WTC11 (cell line): ENCODE measurements at regions of chrX and their contacts with region 1.

Region 1: DNA sequence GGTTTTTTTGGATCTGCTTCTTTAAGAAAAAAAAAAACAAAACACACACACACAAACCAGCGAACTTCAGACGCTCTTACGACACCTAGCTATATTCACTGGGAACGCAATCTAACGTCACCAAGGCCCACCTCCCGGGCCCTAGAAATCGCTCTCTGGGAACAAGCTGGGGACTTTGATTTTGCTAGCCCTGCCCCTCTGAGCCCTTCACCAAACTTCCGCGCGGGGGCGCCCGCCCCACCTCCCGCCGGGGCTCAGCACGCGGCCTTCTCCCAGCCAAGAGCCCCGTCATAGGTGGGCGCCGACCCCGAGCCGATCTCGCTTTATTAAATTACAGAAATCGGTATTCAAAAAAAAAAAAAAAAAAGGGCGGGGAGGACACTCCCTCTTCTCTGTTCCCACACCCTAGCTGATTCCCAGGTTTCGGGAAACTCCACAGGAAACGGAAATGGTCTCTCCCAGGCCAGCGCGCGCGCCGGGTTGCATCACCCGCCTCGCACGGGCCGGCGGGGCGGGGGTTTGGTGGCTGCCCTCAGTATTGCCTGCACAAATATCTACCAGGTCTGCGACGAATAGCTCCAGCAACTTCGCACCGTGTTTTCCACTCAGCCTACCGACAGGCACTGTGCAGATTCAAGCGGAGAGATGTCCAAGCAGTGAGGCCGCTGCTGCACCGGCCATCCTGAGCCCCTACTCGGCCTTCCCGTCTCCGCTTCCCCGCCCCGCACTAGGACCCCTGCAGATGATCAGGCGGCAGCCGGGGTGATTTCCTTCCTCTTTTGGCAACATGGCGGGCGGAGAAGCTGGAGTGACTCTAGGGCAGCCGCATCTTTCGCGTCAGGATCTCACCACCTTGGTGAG is at the start of gene EIF2S3:
- DNase-seq: peak; percentile 81
- ATAC-seq: peak; percentile 91
- H3K4me3 Mint-ChIP-seq: no peak within 1 kb of the TSS
- H3K27ac Mint-ChIP-seq: peak within 1 kb of the TSS; percentile 93
- H3K4me1 Mint-ChIP-seq: no peaks in the 10 kb centered on the region
- H3K27me3 Mint-ChIP-seq: no peaks in the 10 kb centered on the region
- CTCF ChIP-seq: peak; percentile 71
- total RNA-seq, gene EIF2S3: 251 to 299 TPM (median 264 TPM) in 3 replicates

Region 2: DNA sequence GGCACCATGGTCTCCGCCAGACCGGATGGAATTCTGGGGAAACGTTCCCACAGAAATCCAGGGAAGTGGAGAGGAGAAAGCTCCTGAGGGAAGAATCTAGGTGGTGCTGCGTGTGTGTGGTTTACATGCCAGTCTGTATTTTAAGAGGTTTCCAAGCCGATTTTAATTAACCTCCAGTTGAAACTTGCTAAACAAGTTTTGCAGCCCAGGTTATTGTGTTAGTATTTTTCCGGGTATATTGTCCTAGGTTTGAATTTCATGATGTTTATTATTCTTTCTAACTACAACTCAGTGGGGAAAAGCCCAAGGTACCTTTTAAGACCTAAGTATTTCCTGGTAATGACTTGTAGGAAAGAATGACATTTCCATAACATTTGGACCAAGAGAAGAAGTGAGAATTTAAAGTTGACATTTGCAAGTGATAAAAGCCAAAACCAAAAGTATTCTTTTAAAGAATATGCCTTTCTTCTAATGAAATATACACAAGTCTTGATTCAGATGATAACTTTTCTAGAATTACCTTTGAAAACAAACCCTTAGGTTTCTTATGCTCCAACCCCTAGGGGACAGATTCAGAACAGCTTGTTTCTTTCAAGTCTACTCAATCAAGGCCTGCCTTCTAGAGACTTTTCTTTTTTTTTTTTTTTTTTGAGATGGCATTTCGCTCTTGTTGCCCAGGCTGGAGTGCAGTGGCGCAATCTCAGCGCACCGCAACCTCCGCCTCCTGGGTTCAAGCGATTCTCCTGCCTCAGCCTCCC is 256.9 kb before region 1 on chrX:
- CTCF ChIA-PET with region 1: no interaction called
- POLR2A ChIA-PET with region 1: no interaction called
- DNase-seq: no peak
- ATAC-seq: no peak; the same call in 1 of the 2 replicates
- H3K4me3 Mint-ChIP-seq: no peak overlapping the region
- H3K27ac Mint-ChIP-seq: peak overlapping the region; percentile 45; the same call in 1 of the 2 replicates
- H3K4me1 Mint-ChIP-seq: peaks cover 34% of the 10 kb centered on the region
- H3K27me3 Mint-ChIP-seq: no peaks in the 10 kb centered on the region
- CTCF ChIP-seq: no peak

Region 3: GRCh38 chrX:23907498-23908218 is 146.8 kb before region 1 on chrX and contains the starts of genes APOO and CXorf58:
- CTCF ChIA-PET with region 1: interaction called, 48 read pairs
- POLR2A ChIA-PET with region 1: interaction called, 6 read pairs
- DNase-seq: peak; percentile 91
- ATAC-seq: peak; percentile 91
- H3K4me3 Mint-ChIP-seq: peak within 1 kb of the TSS; percentile 74
- H3K27ac Mint-ChIP-seq: peak within 1 kb of the TSS; percentile 92
- H3K4me1 Mint-ChIP-seq: peaks cover 19% of the 10 kb centered on the region
- H3K27me3 Mint-ChIP-seq: no peaks in the 10 kb centered on the region
- CTCF ChIP-seq: 0 out of 2 replicates have a peak, but pooled peaks have one; percentile 25
- total RNA-seq, gene APOO: 41.6 to 55.5 TPM (median 46.9 TPM) in 3 replicates
- total RNA-seq, gene CXorf58: 0.27 TPM in 1 of 3 replicates, not detected in the others

Region 4: DNA sequence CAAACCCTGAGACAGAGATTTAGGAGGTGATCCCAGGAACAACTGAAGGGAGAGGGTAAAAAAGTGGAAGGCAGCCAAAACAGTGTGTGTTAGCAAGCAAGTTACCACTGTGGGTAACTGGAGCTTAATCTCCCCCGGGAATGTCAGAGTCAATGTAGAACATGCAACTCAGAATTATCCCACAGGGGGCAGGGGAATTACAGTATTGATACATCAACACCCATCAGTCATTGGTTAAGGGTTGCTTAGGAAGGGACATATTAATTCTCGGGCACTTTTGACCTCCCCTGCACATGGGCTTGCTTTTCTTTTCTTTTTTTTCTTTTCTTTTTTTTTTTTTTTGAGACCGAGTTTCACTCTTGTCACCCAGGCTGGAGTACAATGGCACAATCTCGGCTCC is 117.3 kb before region 1 on chrX:
- CTCF ChIA-PET with region 1: interaction called, 11 read pairs
- POLR2A ChIA-PET with region 1: no interaction called
- DNase-seq: no peak
- ATAC-seq: 0 out of 2 replicates have a peak, but pooled peaks have one; percentile 38
- H3K4me3 Mint-ChIP-seq: no peak overlapping the region
- H3K27ac Mint-ChIP-seq: no peak overlapping the region
- H3K4me1 Mint-ChIP-seq: peaks cover 2% of the 10 kb centered on the region; the same call in 1 of the 2 replicates
- H3K27me3 Mint-ChIP-seq: no peaks in the 10 kb centered on the region
- CTCF ChIP-seq: no peak

Region 5: GRCh38 chrX:24024819-24025740 is 29.3 kb before region 1 on chrX:
- CTCF ChIA-PET with region 1: interaction called, 13 read pairs
- POLR2A ChIA-PET with region 1: interaction called, 18 read pairs
- DNase-seq: peak; percentile 63
- ATAC-seq: peak; percentile 72
- H3K4me3 Mint-ChIP-seq: peak overlapping the region; percentile 84
- H3K27ac Mint-ChIP-seq: no peak overlapping the region
- H3K4me1 Mint-ChIP-seq: peaks cover 2% of the 10 kb centered on the region; the same call in 1 of the 2 replicates
- H3K27me3 Mint-ChIP-seq: peaks cover 28% of the 10 kb centered on the region
- CTCF ChIP-seq: no peak